Activated naive CD4-positive, alpha-beta T cell treated with anti-CD3 and anti-CD28 coated beads, Interleukin-2, amount 10 ng/mL, durations not matched to agents 7 days and 5 days (primary cell): ENCODE measurements at regions of chr1 and their contacts with region 1.

Region 1: GRCh38 chr1:150464422-150464826 is 22.8 kb upstream of the TARS2 start:
- DNase-seq: peak; percentile 80
- H3K4me3 Mint-ChIP-seq: no peak overlapping the region
- H3K27ac Mint-ChIP-seq: no peak overlapping the region
- H3K4me1 Mint-ChIP-seq: peaks cover 3% of the 10 kb centered on the region
- H3K27me3 Mint-ChIP-seq: no peaks in the 10 kb centered on the region

Region 2: GRCh38 chr1:150397402-150398032 is 66.9 kb before region 1 on chr1:
- CTCF ChIA-PET with region 1: no interaction called
- DNase-seq: no peak
- H3K4me3 Mint-ChIP-seq: no peak overlapping the region
- H3K27ac Mint-ChIP-seq: no peak overlapping the region
- H3K4me1 Mint-ChIP-seq: peaks cover 4% of the 10 kb centered on the region
- H3K27me3 Mint-ChIP-seq: no peaks in the 10 kb centered on the region

Region 3: GRCh38 chr1:150429805-150430204 is 34.6 kb before region 1 on chr1:
- CTCF ChIA-PET with region 1: no interaction called
- DNase-seq: no peak
- H3K4me3 Mint-ChIP-seq: no peak overlapping the region
- H3K27ac Mint-ChIP-seq: peak overlapping the region; percentile 0
- H3K4me1 Mint-ChIP-seq: peaks cover 2% of the 10 kb centered on the region
- H3K27me3 Mint-ChIP-seq: no peaks in the 10 kb centered on the region

Region 4: GRCh38 chr1:150477733-150478132 is 13.3 kb after region 1 on chr1:
- CTCF ChIA-PET with region 1: no interaction called
- DNase-seq: no peak
- H3K4me3 Mint-ChIP-seq: no peak overlapping the region
- H3K27ac Mint-ChIP-seq: no peak overlapping the region
- H3K4me1 Mint-ChIP-seq: no peaks in the 10 kb centered on the region
- H3K27me3 Mint-ChIP-seq: peaks cover 4% of the 10 kb centered on the region

Region 5: DNA sequence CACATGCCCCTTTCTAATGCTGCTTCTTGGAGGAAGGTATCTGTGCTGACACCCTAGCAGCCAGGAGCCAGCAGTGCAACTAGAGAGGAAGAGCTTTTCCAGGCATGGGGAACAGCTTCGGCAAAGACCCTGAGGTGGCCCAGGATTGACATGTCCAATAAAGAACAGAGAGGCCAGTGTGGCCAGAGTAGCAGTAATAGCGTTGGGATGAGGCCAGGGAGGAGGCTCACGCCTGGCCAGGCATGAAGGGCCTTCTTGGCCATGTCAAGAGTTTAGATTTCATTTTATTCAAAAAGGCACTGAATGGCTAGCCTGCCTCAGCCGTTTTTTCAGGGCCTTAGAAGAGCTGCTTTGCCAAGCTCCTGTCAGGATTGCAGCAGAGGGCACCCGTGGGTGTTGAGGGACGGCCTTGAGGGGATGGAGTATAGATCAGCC is 68.5 kb after region 1 on chr1:
- CTCF ChIA-PET with region 1: interaction called, 11 read pairs
- DNase-seq: no peak
- H3K4me3 Mint-ChIP-seq: no peak overlapping the region
- H3K27ac Mint-ChIP-seq: no peak overlapping the region
- H3K4me1 Mint-ChIP-seq: no peaks in the 10 kb centered on the region
- H3K27me3 Mint-ChIP-seq: peaks cover 12% of the 10 kb centered on the region

Region 6: GRCh38 chr1:150661156-150661555 is 196.7 kb after region 1 on chr1:
- CTCF ChIA-PET with region 1: no interaction called
- DNase-seq: no peak
- H3K4me3 Mint-ChIP-seq: no peak overlapping the region
- H3K27ac Mint-ChIP-seq: no peak overlapping the region
- H3K4me1 Mint-ChIP-seq: peaks cover 5% of the 10 kb centered on the region
- H3K27me3 Mint-ChIP-seq: no peaks in the 10 kb centered on the region